Activated CD8-positive, alpha-beta T cell treated with anti-CD3 and anti-CD28 coated beads for 36 hours (primary cell): ENCODE measurements at regions of chr3 and their contacts with region 1.

Region 1: GRCh38 chr3:50350527-50351322 is at the starts of genes CYB561D2 and NPRL2:
- DNase-seq: peak; percentile 98
- ATAC-seq: peak; percentile 89
- H3K4me3 Mint-ChIP-seq: peak within 1 kb of the TSS; percentile 91
- H3K27ac Mint-ChIP-seq: peak within 1 kb of the TSS; percentile 96
- H3K4me1 Mint-ChIP-seq: peaks cover 56% of the 10 kb centered on the region
- H3K27me3 Mint-ChIP-seq: no peaks in the 10 kb centered on the region
- CTCF ChIP-seq: no peak
- total RNA-seq, gene CYB561D2: 17.1 to 18.2 TPM
- total RNA-seq, gene NPRL2: 41.3 to 44.7 TPM

Region 2: GRCh38 chr3:50192689-50193141 is 158.0 kb before region 1 on chr3:
- CTCF ChIA-PET with region 1: no interaction called
- POLR2A ChIA-PET with region 1: no interaction called
- intact Hi-C with region 1: no loop called
- DNase-seq: peak; percentile 93
- ATAC-seq: peak; percentile 78
- H3K4me3 Mint-ChIP-seq: no peak overlapping the region
- H3K27ac Mint-ChIP-seq: no peak overlapping the region
- H3K4me1 Mint-ChIP-seq: peaks cover 11% of the 10 kb centered on the region
- H3K27me3 Mint-ChIP-seq: peaks cover 15% of the 10 kb centered on the region
- CTCF ChIP-seq: peak; percentile 94

Region 3: GRCh38 chr3:50298836-50299637 is 51.7 kb before region 1 on chr3 and contains the starts of genes HYAL3 and NAA80:
- CTCF ChIA-PET with region 1: no interaction called
- POLR2A ChIA-PET with region 1: interaction called, 10 read pairs
- intact Hi-C with region 1: no loop called
- DNase-seq: peak; percentile 100
- ATAC-seq: peak; percentile 92
- H3K4me3 Mint-ChIP-seq: peak within 1 kb of the TSS; percentile 99
- H3K27ac Mint-ChIP-seq: peak within 1 kb of the TSS; percentile 98
- H3K4me1 Mint-ChIP-seq: peaks cover 17% of the 10 kb centered on the region
- H3K27me3 Mint-ChIP-seq: no peaks in the 10 kb centered on the region
- CTCF ChIP-seq: peak; percentile 65
- total RNA-seq, gene HYAL3: 3.3 to 4.1 TPM
- total RNA-seq, gene NAA80: 23.2 to 23.4 TPM